HEK293 (cell line): ENCODE measurements at regions of chr17 and their contacts with region 1.

Region 1: GRCh38 chr17:9768381-9768934 is 22.9 kb downstream of the DHRS7C start:
- H3K4me3 ChIP-seq: no peak overlapping the region
- H3K27ac ChIP-seq: no peak overlapping the region
- H3K4me1 ChIP-seq: no peaks in the 10 kb centered on the region
- CTCF ChIP-seq: no peak

Region 2: GRCh38 chr17:9743096-9743495 is 25.4 kb before region 1 on chr17:
- CTCF ChIA-PET with region 1: interaction called, 11 read pairs
- POLR2A ChIA-PET with region 1: no interaction called
- H3K4me3 ChIP-seq: no peak overlapping the region
- H3K27ac ChIP-seq: no peak overlapping the region
- H3K4me1 ChIP-seq: no peaks in the 10 kb centered on the region
- CTCF ChIP-seq: no peak

Region 3: DNA sequence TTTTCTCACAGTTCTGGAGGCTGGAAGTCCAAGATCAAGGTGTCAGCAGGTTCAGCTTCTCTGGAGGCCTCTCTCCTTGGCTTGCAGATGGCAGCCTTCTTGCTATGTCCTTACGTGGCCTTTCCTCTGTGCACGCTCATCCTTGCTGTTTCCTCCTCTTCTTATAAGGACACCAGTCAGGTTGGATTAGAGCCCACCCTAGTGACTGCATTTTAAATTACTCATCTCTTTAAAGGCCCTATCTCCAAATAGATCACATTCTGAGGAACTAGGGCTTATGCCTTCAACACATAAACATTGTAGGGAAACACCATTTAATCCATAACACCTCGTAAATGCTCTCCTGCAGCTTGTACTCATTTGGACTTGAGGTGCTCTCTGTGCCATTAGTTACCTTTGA is 13.4 kb before region 1 on chr17:
- CTCF ChIA-PET with region 1: interaction called, 24 read pairs
- POLR2A ChIA-PET with region 1: no interaction called
- H3K4me3 ChIP-seq: no peak overlapping the region
- H3K27ac ChIP-seq: no peak overlapping the region
- H3K4me1 ChIP-seq: no peaks in the 10 kb centered on the region
- CTCF ChIP-seq: no peak

Region 4: GRCh38 chr17:9780552-9780951 is 12.1 kb after region 1 on chr17:
- CTCF ChIA-PET with region 1: interaction called, 10 read pairs
- POLR2A ChIA-PET with region 1: no interaction called
- H3K4me3 ChIP-seq: no peak overlapping the region
- H3K27ac ChIP-seq: no peak overlapping the region
- H3K4me1 ChIP-seq: no peaks in the 10 kb centered on the region
- CTCF ChIP-seq: no peak

Region 5: DNA sequence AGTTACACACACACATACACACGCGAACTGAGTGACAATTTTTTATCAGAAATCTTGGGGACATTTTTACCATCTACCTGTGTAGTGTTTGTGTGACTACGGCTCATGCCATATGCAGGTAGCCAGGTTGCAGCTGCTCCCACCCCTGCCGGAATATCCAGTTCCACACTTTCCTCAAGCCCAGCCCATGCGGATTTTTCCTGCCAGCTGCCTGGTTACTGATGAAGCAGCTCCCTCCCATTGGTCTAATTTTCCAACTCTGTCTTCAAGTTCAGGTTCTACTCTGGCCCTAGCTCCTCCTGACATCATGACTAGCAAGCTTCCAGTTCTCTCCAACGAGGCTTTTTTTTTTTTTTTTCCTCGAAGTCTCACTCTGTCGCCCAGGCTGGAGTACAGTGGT is 48.6 kb after region 1 on chr17:
- CTCF ChIA-PET with region 1: no interaction called
- POLR2A ChIA-PET with region 1: no interaction called
- H3K4me3 ChIP-seq: no peak overlapping the region
- H3K27ac ChIP-seq: no peak overlapping the region
- H3K4me1 ChIP-seq: no peaks in the 10 kb centered on the region
- CTCF ChIP-seq: no peak